ENCODE measurements at regions of chr19 and their contacts with region 1.

Region 1: DNA sequence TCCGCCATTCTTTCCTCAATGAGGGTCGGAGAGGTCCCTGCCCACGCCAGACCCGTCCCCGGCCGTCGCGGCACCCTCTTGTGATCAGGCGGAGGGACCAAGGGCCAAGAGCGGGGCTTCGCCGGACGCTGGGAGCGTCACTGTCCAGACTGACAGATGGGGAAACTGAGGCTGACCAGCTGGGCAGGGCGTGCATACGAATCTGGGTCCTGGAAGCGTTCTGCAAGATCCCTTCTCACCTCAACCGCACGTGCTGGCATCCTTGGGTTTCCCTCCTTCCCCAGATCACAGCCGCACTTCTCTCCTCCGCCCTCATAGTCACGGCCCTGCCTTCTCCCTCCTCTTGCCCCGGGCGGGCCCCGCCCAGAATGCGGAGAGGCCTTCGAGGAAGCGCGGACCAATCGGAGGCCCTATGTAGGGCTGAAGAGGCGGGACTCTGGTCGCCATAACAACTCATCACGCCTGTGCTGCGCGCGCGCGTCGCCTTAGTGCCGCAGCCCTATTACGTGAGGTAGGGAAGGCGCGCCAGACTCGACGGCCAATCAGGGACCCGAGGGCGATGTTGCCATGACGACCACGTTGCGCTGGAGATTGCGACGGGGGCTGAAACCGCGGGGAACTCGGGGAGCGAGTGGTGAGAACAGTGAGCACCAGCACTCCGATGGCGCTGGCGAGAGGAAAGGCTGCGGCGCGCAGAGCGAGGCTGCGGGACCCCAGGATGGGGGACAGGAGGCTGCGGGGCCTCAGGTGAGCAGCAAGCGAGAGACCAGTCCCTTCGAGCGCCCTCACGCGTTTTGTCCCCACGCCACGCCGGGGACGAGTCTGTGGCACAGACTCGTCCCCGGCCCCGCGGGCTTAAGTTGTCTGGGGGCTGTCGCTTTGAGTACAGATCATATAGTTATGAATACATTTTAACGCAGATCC is 5.7 kb downstream of the RNF225 start:
- DNase-seq: peak; percentile 100
- H3K4me3 Mint-ChIP-seq: peak overlapping the region; percentile 82
- H3K27ac Mint-ChIP-seq: peak overlapping the region; percentile 77
- H3K4me1 Mint-ChIP-seq: peaks cover 18% of the 10 kb centered on the region
- H3K27me3 Mint-ChIP-seq: peaks cover 3% of the 10 kb centered on the region

Region 2: DNA sequence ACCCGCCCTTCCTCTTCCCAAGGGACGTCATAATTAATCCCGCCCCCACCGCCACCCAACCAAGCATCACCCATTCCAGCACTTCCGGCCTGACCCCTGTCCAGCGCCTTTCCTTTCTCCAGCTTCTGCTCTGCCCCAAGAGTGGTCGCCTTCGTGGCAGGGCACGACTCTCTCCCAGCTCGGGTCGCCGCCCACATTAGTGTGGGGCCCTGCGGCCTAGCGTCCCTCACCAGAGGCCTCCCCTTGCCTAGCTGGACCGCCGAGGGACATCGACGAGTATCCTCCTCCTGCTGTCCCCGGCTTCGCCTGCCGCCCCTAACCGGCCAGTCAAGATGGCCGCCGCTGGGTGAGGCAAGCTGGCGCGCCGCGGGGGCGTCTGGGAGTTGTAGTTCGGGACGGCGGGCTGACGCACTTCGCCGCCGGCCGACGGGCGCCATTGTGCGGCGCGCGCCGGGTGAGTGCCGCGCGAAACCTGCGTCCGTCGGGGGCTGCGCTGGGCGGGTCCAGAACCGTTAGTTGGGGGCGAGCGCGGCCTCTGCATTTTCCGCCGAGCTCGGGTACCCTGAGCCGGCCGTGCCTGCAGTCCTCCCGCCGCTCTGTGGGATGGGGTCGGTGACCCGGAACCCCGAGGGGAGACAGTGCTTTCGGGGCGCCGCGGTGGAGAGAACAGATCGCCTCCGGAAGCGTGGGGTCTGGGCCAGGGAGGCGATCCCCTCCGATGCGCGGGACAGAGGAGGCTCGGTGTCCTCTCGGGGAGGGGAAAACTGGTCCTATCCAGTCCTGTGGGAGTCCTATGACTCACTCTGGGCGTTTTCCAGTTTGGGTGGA is 218.0 kb before region 1 on chr19 and contains the start of gene ZNF274:
- CTCF ChIA-PET with region 1: no interaction called
- POLR2A ChIA-PET with region 1: no interaction called
- intact Hi-C with region 1: loop called (anchors 1 kb)
- DNase-seq: peak; percentile 95
- H3K4me3 Mint-ChIP-seq: peak within 1 kb of the TSS; percentile 92
- H3K27ac Mint-ChIP-seq: peak within 1 kb of the TSS; percentile 99
- H3K4me1 Mint-ChIP-seq: peaks cover 16% of the 10 kb centered on the region
- H3K27me3 Mint-ChIP-seq: no peaks in the 10 kb centered on the region
- total RNA-seq, gene ZNF274: 19.1 to 19.6 TPM

Region 3: DNA sequence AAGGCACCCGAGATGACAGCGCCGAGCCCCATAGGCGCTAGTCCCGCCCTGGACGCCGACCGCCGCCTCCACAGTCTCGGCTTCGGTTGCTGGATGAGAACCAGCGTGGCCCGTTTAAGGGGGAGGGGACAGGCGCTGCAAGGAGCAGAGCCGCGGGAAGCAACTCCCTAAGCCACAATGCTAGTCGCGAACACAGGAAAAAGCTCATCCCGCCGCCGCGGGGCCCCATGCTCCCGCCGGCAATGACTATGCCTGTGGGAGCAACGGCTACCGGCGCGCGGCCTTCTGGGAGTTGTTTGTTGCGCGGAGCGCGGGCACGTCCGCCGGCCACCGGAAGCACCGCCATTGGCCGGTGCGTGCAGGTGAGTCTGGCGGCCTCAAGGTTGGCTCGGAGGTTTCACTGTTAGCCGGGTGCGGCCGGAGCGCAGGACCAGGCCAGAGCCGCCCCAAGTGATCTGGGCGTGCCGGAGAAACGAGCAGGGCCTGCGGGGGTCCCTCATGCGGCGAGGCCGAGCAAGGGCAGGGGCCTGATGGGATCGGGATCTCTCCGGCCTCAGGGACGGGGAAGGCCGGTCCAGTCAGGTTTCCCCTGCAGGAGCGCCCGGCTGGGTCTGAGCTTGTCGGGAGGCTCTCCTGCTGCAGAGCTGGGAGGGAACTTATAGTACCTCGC is 172.5 kb before region 1 on chr19 and contains the start of gene ZNF544:
- CTCF ChIA-PET with region 1: no interaction called
- POLR2A ChIA-PET with region 1: no interaction called
- intact Hi-C with region 1: loop called (anchors 1 kb)
- DNase-seq: peak; percentile 82
- H3K4me3 Mint-ChIP-seq: peak within 1 kb of the TSS; percentile 95
- H3K27ac Mint-ChIP-seq: peak within 1 kb of the TSS; percentile 92
- H3K4me1 Mint-ChIP-seq: peaks cover 32% of the 10 kb centered on the region
- H3K27me3 Mint-ChIP-seq: no peaks in the 10 kb centered on the region
- total RNA-seq, gene ZNF544: 39.6 to 45.4 TPM

Region 4: GRCh38 chr19:58362272-58362994 is 38.7 kb before region 1 on chr19 and contains the start of gene ZNF497:
- CTCF ChIA-PET with region 1: no interaction called
- POLR2A ChIA-PET with region 1: no interaction called
- intact Hi-C with region 1: loop called (anchors 1 kb)
- DNase-seq: peak; percentile 98
- H3K4me3 Mint-ChIP-seq: peak within 1 kb of the TSS; percentile 94
- H3K27ac Mint-ChIP-seq: peak within 1 kb of the TSS; percentile 89
- H3K4me1 Mint-ChIP-seq: peaks cover 8% of the 10 kb centered on the region
- H3K27me3 Mint-ChIP-seq: no peaks in the 10 kb centered on the region
- total RNA-seq, gene ZNF497: 0.31 to 0.93 TPM

Region 5: DNA sequence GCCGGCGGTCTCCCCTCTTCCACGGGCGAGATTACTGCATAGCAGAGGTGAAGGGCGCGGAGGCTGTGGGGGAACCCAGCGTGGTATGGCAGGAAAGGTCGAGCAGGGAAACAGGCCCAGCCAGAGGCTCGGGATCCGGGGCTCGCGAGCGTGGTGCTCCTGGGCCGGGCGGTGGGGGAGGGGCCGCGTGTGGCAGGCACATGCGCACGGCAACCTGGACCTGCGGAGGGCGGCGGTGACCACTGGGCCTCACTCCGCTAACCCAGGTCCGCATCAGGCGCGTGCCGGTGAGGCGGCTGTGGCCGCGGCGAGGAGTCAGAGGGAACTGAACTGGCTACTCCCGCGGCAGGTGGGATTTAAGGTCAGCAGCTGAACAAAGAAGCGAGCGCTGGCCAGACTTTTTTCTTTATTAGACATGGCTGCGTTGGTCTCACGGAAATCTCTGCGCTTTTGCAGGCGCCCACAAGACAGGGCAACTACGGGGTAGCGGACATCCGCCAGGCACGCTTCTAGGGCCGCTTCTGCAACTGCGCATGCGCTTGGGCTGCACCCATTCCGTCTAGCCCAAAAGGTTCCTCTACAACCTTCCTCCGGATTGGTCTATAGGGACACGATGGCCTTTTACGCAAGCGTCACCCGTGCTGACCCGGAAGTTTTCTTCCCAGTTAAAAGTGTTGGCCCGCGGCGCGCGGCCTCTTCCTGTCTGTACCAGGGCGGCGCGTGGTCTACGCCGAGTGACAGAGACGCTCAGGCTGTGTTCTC is 14.4 kb before region 1 on chr19 and contains the start of gene RPS5:
- CTCF ChIA-PET with region 1: no interaction called
- POLR2A ChIA-PET with region 1: no interaction called
- intact Hi-C with region 1: loop called (anchors 1 kb)
- DNase-seq: peak; percentile 97
- H3K4me3 Mint-ChIP-seq: peak within 1 kb of the TSS; percentile 94
- H3K27ac Mint-ChIP-seq: peak within 1 kb of the TSS; percentile 95
- H3K4me1 Mint-ChIP-seq: peaks cover 44% of the 10 kb centered on the region
- H3K27me3 Mint-ChIP-seq: no peaks in the 10 kb centered on the region
- total RNA-seq, gene RPS5: 1,415 to 1,438 TPM

Region 6: GRCh38 chr19:58416604-58417003 is 15.4 kb after region 1 on chr19:
- CTCF ChIA-PET with region 1: no interaction called
- POLR2A ChIA-PET with region 1: no interaction called
- intact Hi-C with region 1: no loop called
- DNase-seq: no peak
- H3K4me3 Mint-ChIP-seq: no peak overlapping the region
- H3K27ac Mint-ChIP-seq: no peak overlapping the region
- H3K4me1 Mint-ChIP-seq: peaks cover 2% of the 10 kb centered on the region
- H3K27me3 Mint-ChIP-seq: no peaks in the 10 kb centered on the region

Region 7: GRCh38 chr19:58482372-58482771 is 81.2 kb after region 1 on chr19:
- CTCF ChIA-PET with region 1: no interaction called
- POLR2A ChIA-PET with region 1: no interaction called
- intact Hi-C with region 1: no loop called
- DNase-seq: no peak
- H3K4me3 Mint-ChIP-seq: no peak overlapping the region
- H3K27ac Mint-ChIP-seq: no peak overlapping the region
- H3K4me1 Mint-ChIP-seq: no peaks in the 10 kb centered on the region
- H3K27me3 Mint-ChIP-seq: no peaks in the 10 kb centered on the region

Measured in activated CD4-positive, alpha-beta memory T cell treated with anti-CD3 and anti-CD28 coated beads for 36 hours (primary cell).